Heart right ventricle (tissue), 16 donors: ENCODE measurements at regions of chr10 and their contacts with region 1.

Region 1: GRCh38 chr10:3043512-3044368 is 23.6 kb upstream of the PFKP start:
- DNase-seq: peak; percentile 33 to 52
- ATAC-seq: peak; percentile 62 to 83 (median 71)
- H3K4me3 ChIP-seq: no peak overlapping the region
- H3K27ac ChIP-seq: peak overlapping the region in 6 of 10 donors; percentile 4 to 66 (median 54)
- H3K4me1 ChIP-seq: peaks cover 4 to 24% (median 11%) of the 10 kb centered on the region in 9 donors
- H3K27me3 ChIP-seq: no peaks in the 10 kb centered on the region
- CTCF ChIP-seq: peak; percentile 37 to 87 (median 72)

Region 2: DNA sequence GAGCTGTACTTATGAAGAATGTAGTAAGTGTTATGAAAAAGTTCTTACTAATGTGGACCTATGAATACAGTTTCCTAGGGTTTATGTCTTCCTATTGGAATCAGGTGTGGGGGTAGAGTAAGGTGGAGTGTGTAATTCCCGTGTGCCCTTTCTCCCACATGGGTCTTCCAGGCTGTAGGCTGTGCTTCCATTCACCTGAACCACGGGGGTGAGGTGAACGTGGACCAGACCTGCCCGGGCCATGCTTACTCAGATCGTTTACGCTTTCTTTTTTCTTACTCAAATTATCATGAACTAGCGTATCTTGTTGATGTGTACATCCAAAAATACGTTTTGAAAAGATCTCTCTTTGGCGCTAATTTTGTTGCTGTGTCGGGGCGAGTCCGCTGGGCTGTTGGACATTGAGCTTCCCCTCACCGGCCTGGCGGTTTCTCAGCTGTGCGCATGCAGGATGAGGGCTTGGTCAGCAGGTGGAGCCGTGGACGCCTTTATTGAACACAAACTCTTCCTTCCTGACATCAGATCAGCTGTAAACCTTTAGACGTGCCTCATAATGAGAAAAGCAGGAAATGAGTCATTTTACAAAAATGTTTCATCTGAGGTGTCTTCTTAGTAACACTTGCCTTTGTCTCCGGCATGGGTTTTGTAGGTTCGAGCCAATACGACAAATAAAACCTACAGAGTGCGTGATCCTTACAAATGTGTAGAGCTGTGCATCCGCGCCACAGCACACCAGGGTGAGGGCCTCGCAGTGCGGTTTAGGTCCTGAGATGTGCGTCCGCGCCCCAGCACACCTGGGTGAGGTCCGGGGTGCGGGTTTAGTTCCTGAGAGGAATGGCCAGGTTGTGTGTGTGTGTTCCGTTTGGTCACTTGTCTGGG is 1933.7 kb before region 1 on chr10:
- intact Hi-C with region 1: loop called in 2 of 10 experiments (anchors 10 kb)
- DNase-seq: no peak
- ATAC-seq: peak in 7 of 8 donors; percentile 41 to 64 (median 54)
- H3K4me3 ChIP-seq: no peak overlapping the region
- H3K27ac ChIP-seq: peak overlapping the region in 1 of 10 donors; percentile 60
- H3K4me1 ChIP-seq: peaks cover 0 to 18% (median 4%) of the 10 kb centered on the region in 9 donors
- H3K27me3 ChIP-seq: no peaks in the 10 kb centered on the region
- CTCF ChIP-seq: peak; percentile 19 to 67 (median 51)

Region 3: DNA sequence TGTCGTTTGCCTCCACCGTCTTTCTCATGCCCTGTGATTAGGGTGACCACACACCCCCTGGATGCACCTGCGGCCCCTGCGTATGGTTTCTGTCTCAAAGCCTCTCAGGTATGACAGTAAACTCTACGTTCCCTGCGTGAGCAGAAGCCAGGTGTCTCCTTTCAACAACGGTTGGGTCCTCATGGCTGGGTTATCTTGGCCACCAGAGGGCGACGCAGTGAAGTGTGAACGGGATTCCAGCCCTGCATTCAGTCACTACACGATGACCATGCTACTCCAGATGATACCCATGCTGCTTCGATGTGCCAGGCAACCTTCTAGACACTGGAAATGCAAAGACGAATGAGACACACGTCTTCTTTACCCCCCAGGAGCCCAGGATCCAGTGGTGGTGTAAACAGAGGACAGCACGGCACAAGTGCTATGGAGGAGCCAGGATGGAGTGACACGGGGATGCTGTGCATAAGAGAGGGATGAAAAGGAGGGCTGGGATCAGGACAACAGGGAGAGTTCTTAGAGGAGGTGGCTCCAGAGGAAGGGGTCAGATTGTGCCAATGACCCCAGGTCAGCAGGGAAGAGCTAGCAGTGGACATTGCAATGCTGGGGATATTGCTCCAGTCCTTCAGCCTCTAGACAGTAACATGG is 204.5 kb before region 1 on chr10:
- intact Hi-C with region 1: loop called in 4 of 10 experiments (anchors 5 to 10 kb)
- DNase-seq: peak in 1 of 2 donors; percentile 9
- ATAC-seq: no peak
- H3K4me3 ChIP-seq: no peak overlapping the region
- H3K27ac ChIP-seq: no peak overlapping the region
- H3K4me1 ChIP-seq: no peaks in the 10 kb centered on the region
- H3K27me3 ChIP-seq: peaks cover 0 to 40% (median 17%) of the 10 kb centered on the region in 7 donors
- CTCF ChIP-seq: peak in 7 of 9 donors; percentile 38 to 61 (median 47)

Region 4: GRCh38 chr10:2844925-2845324 is 198.8 kb before region 1 on chr10:
- intact Hi-C with region 1: loop called in 1 of 10 experiments (anchors 5 kb)
- DNase-seq: no peak
- ATAC-seq: no peak
- H3K4me3 ChIP-seq: no peak overlapping the region
- H3K27ac ChIP-seq: no peak overlapping the region
- H3K4me1 ChIP-seq: no peaks in the 10 kb centered on the region
- H3K27me3 ChIP-seq: peaks cover 0 to 19% (median under 1%) of the 10 kb centered on the region in 7 donors
- CTCF ChIP-seq: no peak

Region 5: GRCh38 chr10:2927958-2928840 is 115.5 kb before region 1 on chr10:
- intact Hi-C with region 1: loop called in 9 of 10 experiments (anchors 1 to 10 kb)
- DNase-seq: peak; percentile 54 to 64
- ATAC-seq: peak; percentile 47 to 86 (median 78)
- H3K4me3 ChIP-seq: no peak overlapping the region
- H3K27ac ChIP-seq: no peak overlapping the region
- H3K4me1 ChIP-seq: peaks cover 0 to 10% (median 0%) of the 10 kb centered on the region in 9 donors
- H3K27me3 ChIP-seq: peaks cover 0 to 25% (median 12%) of the 10 kb centered on the region in 7 donors
- CTCF ChIP-seq: peak; percentile 38 to 74 (median 68)

Region 6: GRCh38 chr10:2938869-2939268 is 104.9 kb before region 1 on chr10:
- intact Hi-C with region 1: loop called in 3 of 10 experiments (anchors 5 to 10 kb)
- DNase-seq: no peak
- ATAC-seq: no peak
- H3K4me3 ChIP-seq: no peak overlapping the region
- H3K27ac ChIP-seq: no peak overlapping the region
- H3K4me1 ChIP-seq: no peaks in the 10 kb centered on the region
- H3K27me3 ChIP-seq: peaks cover 0 to 73% (median 48%) of the 10 kb centered on the region in 7 donors
- CTCF ChIP-seq: peak in 3 of 9 donors; percentile 14 to 32 (median 19)